ENCODE measurements at regions of chr12 and their contacts with region 1.

Region 1: GRCh38 chr12:56299853-56300643 is at the start of gene CS:
- H3K4me3 Mint-ChIP-seq: peak within 1 kb of the TSS; percentile 95
- H3K27ac Mint-ChIP-seq: peak within 1 kb of the TSS; percentile 99
- H3K4me1 Mint-ChIP-seq: peaks cover 54% of the 10 kb centered on the region
- H3K27me3 Mint-ChIP-seq: no peaks in the 10 kb centered on the region

Region 2: GRCh38 chr12:56266693-56267442 is 33.2 kb before region 1 on chr12 and contains the start of gene COQ10A:
- intact Hi-C with region 1: loop called (anchors 1 kb)
- H3K4me3 Mint-ChIP-seq: peak within 1 kb of the TSS; percentile 91
- H3K27ac Mint-ChIP-seq: peak within 1 kb of the TSS; percentile 86
- H3K4me1 Mint-ChIP-seq: peaks cover 19% of the 10 kb centered on the region
- H3K27me3 Mint-ChIP-seq: no peaks in the 10 kb centered on the region

Region 3: GRCh38 chr12:56333679-56334489 is 33.8 kb after region 1 on chr12 and contains the start of gene PAN2:
- intact Hi-C with region 1: no loop called
- H3K4me3 Mint-ChIP-seq: peak within 1 kb of the TSS; percentile 88
- H3K27ac Mint-ChIP-seq: peak within 1 kb of the TSS; percentile 100
- H3K4me1 Mint-ChIP-seq: peaks cover 60% of the 10 kb centered on the region
- H3K27me3 Mint-ChIP-seq: no peaks in the 10 kb centered on the region

Region 4: GRCh38 chr12:56709759-56710376 is 409.8 kb after region 1 on chr12:
- intact Hi-C with region 1: no loop called
- H3K4me3 Mint-ChIP-seq: no peak overlapping the region
- H3K27ac Mint-ChIP-seq: peak overlapping the region; percentile 39
- H3K4me1 Mint-ChIP-seq: peaks cover 17% of the 10 kb centered on the region
- H3K27me3 Mint-ChIP-seq: no peaks in the 10 kb centered on the region

Region 5: GRCh38 chr12:56724972-56725722 is 425.1 kb after region 1 on chr12 and contains the start of gene NACA:
- intact Hi-C with region 1: no loop called
- H3K4me3 Mint-ChIP-seq: peak within 1 kb of the TSS; percentile 97
- H3K27ac Mint-ChIP-seq: peak within 1 kb of the TSS; percentile 99
- H3K4me1 Mint-ChIP-seq: peaks cover 48% of the 10 kb centered on the region
- H3K27me3 Mint-ChIP-seq: no peaks in the 10 kb centered on the region

Measured in dendritic cell treated with granulocyte-macrophage colony-stimulating factor and Interleukin-4, amounts not matched to agents 40 ng/mL and 50 ng/mL, for 4 days (primary cell).